ENCODE measurements at regions of chr21 and their contacts with region 1.

Region 1: DNA sequence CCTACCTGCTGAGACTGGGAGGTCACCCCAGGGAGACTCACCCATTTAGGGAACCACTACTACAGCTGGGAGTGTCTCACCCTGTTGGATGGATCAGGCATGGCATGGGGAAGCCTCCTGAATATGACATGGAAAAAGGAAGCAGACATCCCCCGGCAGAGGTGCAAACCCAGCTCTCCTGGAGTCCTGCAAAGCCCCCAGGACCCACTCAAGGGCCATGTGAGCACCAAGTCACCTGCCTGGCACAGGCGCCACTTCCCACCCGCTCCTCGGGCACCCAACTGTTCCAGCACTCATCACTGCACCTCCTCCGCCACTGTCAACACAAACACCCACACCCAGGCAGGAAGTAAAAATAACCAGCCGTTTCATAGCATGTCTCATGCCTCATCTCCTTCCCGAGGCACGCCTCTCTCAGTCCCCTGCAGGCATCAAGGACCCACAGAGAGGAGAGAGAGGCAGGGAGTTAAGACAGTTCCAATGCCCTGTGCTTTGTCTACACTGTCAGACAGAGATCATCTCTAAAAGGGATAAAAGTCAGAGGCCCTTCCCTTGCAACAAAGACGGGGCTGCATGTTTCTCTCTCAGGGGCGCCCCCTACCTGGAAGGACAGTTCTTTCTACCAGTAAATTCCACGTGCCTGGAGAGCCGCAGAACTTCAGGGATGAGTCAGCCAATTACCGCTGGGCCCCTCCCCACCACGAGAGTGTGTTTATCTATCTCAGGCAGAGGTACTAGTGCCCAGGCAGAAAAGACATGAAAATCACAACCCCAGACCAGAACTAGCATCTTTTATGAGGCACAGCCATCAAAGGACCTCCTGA is 150.1 kb upstream of the SOD1 start:
- DNase-seq: peak; percentile 93
- ATAC-seq: peak; percentile 91
- H3K4me3 Mint-ChIP-seq: peak overlapping the region; percentile 49
- H3K27ac Mint-ChIP-seq: peak overlapping the region; percentile 78
- H3K4me1 Mint-ChIP-seq: peaks cover 34% of the 10 kb centered on the region
- H3K27me3 Mint-ChIP-seq: peaks cover 2% of the 10 kb centered on the region

Region 2: DNA sequence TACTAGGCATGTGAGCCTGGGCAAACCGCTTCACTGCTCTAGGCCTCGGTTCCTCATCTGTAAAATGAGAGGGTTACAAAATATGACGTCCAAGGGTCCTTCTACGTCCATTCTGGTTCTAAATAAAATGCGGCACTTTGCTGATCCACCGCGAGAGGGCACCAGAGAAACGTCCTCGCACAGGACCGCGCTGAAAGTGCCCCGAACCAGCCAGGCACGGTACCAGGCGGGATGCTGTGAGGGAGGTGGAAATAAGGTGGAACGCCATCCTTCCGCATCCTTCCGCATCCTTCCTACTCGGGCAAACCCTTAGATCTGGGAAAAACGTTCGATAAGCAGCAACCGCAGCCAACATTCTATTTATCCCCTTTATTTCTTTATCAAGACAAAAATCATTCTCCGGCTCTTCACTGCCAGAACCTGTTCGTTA is 410.8 kb before region 1 on chr21:
- CTCF ChIA-PET with region 1: no interaction called
- POLR2A ChIA-PET with region 1: no interaction called
- intact Hi-C with region 1: loop called in 1 of 2 experiments (anchors 5 kb)
- DNase-seq: peak; percentile 86
- ATAC-seq: peak; percentile 89
- H3K4me3 Mint-ChIP-seq: no peak overlapping the region
- H3K27ac Mint-ChIP-seq: peak overlapping the region; percentile 38
- H3K4me1 Mint-ChIP-seq: peaks cover 21% of the 10 kb centered on the region
- H3K27me3 Mint-ChIP-seq: peaks cover 3% of the 10 kb centered on the region

Region 3: GRCh38 chr21:31255896-31256295 is 253.5 kb before region 1 on chr21:
- CTCF ChIA-PET with region 1: no interaction called
- POLR2A ChIA-PET with region 1: no interaction called
- intact Hi-C with region 1: no loop called
- DNase-seq: no peak
- ATAC-seq: no peak
- H3K4me3 Mint-ChIP-seq: no peak overlapping the region
- H3K27ac Mint-ChIP-seq: no peak overlapping the region
- H3K4me1 Mint-ChIP-seq: no peaks in the 10 kb centered on the region
- H3K27me3 Mint-ChIP-seq: no peaks in the 10 kb centered on the region

Region 4: GRCh38 chr21:31426235-31426797 is 83.1 kb before region 1 on chr21:
- CTCF ChIA-PET with region 1: no interaction called
- POLR2A ChIA-PET with region 1: no interaction called
- intact Hi-C with region 1: loop called in 1 of 2 experiments (anchors 5 kb)
- DNase-seq: peak; percentile 22
- ATAC-seq: peak; percentile 89
- H3K4me3 Mint-ChIP-seq: peak overlapping the region; percentile 18
- H3K27ac Mint-ChIP-seq: peak overlapping the region; percentile 53
- H3K4me1 Mint-ChIP-seq: peaks cover 20% of the 10 kb centered on the region
- H3K27me3 Mint-ChIP-seq: no peaks in the 10 kb centered on the region

Region 5: DNA sequence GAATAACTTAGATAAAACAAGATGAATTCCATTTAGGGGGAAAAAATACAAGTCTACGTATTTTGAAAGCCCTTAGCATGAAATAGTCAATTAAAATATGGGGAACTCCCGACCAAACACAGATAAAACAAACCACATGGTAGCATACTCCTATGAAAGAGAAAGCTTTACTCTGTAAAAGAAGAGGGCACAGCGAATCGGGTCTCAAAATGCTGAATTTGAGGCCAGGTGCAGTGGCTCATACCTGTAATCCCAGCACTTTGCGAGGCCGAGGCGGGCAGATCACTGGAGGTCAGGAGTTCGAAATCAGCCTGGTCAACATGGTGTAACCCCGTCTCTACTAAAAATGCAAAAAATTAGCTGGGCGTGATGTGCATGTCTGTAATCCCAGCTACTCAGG is 48.4 kb before region 1 on chr21:
- CTCF ChIA-PET with region 1: no interaction called
- POLR2A ChIA-PET with region 1: no interaction called
- intact Hi-C with region 1: loop called in 1 of 2 experiments (anchors 5 kb)
- DNase-seq: peak; percentile 10
- ATAC-seq: peak; percentile 74
- H3K4me3 Mint-ChIP-seq: no peak overlapping the region
- H3K27ac Mint-ChIP-seq: no peak overlapping the region
- H3K4me1 Mint-ChIP-seq: peaks cover 10% of the 10 kb centered on the region
- H3K27me3 Mint-ChIP-seq: no peaks in the 10 kb centered on the region

Measured in activated CD4-positive, alpha-beta T cell treated with anti-CD3 and anti-CD28 coated beads for 36 hours (primary cell).